Dendritic cell treated with granulocyte-macrophage colony-stimulating factor and Interleukin-4, amounts not matched to agents 40 ng/mL and 50 ng/mL, for 4 days (primary cell): ENCODE measurements at regions of chr11 and their contacts with region 1.

Region 1: DNA sequence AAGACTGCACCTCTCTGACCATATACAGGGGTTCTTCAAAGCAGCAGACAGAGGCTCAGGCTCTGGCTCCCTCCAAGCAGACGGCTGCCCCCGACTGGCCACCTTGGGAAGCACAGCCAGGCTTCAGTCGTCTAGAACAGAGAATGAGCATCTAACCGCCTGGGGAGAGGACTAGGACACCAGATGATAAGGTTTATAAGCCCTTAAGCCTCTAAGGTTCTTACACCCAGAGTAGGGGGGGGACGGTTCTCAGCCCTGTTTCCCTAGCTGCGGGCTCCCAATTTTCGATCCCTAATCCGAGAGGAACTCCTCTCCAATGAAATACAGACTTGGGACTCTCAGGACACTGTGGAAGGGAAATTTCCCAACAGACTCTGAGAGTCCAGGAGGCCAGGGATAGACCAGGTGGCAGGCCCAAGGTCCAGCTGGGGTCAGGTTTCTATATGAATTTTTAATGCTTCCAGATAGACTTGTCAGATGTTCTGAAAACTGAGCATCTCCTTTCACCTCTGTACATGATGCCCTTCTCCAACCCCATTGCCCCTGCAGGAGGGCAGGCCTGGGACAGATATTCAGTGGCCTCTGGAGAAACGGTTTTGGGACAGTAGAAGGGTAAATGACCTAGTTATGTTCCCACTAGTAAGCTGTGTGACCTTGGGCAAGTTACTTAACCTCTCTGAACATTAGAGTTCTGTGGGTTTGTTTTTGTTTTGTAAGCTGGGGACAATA is 20.2 kb downstream of the RTN4RL2 start:
- H3K4me3 Mint-ChIP-seq: no peak overlapping the region
- H3K27ac Mint-ChIP-seq: no peak overlapping the region
- H3K4me1 Mint-ChIP-seq: peaks cover 64% of the 10 kb centered on the region
- H3K27me3 Mint-ChIP-seq: peaks cover 57% of the 10 kb centered on the region

Region 2: DNA sequence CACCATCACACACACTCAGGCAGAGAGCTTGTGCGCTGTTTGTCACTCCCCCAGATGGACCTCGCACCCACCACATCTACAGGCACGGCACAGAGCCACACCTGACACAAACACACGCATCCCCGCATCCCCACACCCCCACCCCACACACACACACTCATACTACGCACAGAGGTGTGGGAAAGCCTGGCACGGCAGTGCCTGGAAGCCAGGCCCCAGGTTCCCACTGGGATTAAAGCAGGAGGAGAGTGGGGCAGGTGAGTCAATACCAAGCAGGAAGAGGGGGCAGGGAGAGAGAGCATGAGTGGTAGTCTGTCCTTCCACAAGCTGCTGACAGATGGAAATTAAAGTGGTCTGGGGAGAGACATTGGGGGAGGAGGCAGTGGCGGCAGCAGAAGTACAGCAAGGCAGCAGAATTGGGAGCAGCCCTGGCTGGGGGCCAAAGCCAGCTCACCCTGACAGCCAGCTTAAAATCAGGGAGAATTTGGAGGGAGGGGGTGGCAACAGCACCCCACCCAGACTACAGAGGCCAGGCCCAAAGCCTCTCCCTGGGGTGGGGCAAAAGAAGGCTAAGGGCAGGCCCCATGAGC is 176.5 kb before region 1 on chr11:
- intact Hi-C with region 1: no loop called
- H3K4me3 Mint-ChIP-seq: no peak overlapping the region
- H3K27ac Mint-ChIP-seq: peak overlapping the region; percentile 4
- H3K4me1 Mint-ChIP-seq: peaks cover 37% of the 10 kb centered on the region
- H3K27me3 Mint-ChIP-seq: peaks cover 4% of the 10 kb centered on the region

Region 3: DNA sequence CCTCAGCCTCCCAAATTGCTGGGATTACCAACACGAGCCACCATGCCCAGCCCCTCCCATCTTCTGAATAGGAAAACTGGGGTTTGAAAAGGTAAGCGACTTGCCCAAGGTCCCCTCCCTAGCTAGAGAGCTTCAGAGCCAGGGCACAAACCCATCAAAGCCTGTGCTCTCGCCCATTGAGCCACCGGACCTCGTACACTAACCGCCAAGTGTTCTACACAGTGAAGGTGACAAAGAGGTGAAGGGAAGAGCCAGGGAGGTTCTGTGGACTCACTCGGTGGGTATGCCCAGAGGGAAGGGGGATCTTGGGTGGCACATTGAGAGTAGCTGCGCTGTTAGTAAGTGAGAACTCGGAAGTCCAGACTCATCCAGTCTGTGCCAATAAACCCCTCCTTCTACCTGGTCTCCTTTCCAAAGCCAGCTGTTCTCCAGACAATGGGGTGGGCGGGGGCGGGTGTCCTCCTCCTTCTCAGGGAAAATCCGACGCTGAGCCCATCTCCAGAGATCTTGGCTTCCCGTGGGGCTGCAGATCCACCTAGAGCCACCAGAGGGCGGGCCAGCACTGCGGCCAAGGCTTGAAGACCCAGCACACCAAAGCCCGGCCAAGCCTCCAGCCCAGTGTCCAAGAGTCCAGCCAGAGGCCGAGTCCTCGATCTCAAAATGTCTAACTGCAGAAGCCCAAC is 23.5 kb before region 1 on chr11:
- intact Hi-C with region 1: loop called (anchors 2 kb)
- H3K4me3 Mint-ChIP-seq: no peak overlapping the region
- H3K27ac Mint-ChIP-seq: no peak overlapping the region
- H3K4me1 Mint-ChIP-seq: peaks cover 31% of the 10 kb centered on the region
- H3K27me3 Mint-ChIP-seq: peaks cover 43% of the 10 kb centered on the region

Region 4: GRCh38 chr11:57515332-57516060 is 34.9 kb after region 1 on chr11 and contains the start of gene SLC43A1:
- intact Hi-C with region 1: no loop called
- H3K4me3 Mint-ChIP-seq: peak within 1 kb of the TSS; percentile 99
- H3K27ac Mint-ChIP-seq: peak within 1 kb of the TSS; percentile 77
- H3K4me1 Mint-ChIP-seq: peaks cover 35% of the 10 kb centered on the region
- H3K27me3 Mint-ChIP-seq: peaks cover 19% of the 10 kb centered on the region